Activated naive CD4-positive, alpha-beta T cell treated with anti-CD3 and anti-CD28 coated beads for 36 hours (primary cell): ENCODE measurements at regions of chr22 and their contacts with region 1.

Region 1: DNA sequence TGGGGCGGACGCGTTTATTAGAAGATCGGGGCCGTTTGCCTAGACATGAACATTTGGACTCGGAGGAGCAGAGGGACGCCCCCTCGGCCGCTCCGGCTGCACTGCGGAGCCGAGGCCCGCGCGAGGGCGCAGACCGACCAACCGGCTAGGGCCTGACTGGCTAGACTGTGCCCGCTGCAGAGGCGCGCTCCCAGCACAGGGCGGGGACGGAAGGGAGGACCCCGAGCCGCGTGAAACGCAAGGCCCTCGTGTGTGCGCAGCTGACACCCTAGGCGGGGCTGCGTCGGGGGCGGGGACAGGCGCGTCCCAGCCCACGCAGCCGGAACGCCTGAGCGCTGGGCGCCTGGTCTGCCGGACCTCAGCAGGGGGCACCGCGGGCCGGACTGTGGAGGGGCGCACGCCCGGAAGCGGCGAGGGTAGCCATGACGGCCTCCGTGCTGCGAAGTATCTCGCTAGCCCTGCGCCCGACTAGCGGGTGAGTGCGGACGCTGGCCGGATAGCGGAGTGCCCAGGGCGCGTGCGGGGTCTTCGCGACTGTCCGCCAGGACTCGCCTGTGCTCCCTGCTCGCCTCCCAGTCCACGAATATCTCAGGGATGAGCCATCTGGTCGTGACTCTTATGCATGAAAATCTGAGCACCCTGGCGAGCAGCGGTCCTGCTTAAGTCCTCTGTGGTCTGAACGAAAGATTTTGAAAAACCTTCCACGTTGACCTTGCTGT is at the start of gene MRPL40:
- DNase-seq: peak; percentile 92
- H3K4me3 Mint-ChIP-seq: peak within 1 kb of the TSS; percentile 73
- H3K27ac Mint-ChIP-seq: peak within 1 kb of the TSS; percentile 88
- H3K4me1 Mint-ChIP-seq: peaks cover 44% of the 10 kb centered on the region
- H3K27me3 Mint-ChIP-seq: no peaks in the 10 kb centered on the region
- total RNA-seq, gene MRPL40: 32.6 to 34.9 TPM

Region 2: DNA sequence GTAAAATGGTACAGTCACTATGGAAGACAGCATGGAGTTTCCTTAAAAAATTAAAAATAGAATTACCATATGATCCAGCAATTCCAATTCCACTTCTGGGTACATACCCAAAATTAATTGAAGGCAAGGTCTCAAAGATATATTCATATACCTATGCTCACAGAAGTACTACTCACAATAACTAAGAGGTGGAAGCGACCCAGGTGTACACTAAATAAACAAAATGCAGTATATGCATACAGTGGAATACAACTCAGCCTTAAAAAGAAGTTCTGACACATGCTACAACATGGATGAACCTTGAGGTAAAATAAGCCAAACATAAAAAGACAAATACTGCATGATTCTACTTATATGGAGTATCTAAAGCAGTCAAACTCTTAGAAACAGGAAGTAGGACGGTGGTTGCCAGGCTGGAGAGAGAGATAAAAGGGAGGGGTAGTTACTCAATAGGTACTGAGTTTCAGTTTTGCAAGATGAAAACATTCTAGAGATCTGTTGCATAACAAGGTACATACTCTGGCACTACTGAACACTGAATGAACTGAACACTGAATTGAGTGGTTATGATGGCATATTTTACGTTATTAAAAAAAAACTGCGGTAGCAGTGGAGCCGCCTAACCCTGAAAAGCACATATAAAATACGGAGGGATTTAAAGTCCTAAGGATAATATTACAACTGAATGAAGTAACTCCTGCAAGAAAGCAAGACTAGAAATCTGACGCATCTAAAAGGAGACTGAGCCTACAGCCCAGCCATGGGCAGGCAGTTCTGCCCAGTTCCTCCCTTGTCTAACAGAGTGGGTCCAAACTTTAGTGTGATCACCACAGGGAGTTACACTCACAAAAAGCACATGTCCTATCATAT is 322.9 kb before region 1 on chr22:
- CTCF ChIA-PET with region 1: no interaction called
- intact Hi-C with region 1: loop called (anchors 5 kb)
- DNase-seq: peak; percentile 78
- H3K4me3 Mint-ChIP-seq: peak overlapping the region; percentile 39
- H3K27ac Mint-ChIP-seq: peak overlapping the region; percentile 79
- H3K4me1 Mint-ChIP-seq: peaks cover 67% of the 10 kb centered on the region
- H3K27me3 Mint-ChIP-seq: no peaks in the 10 kb centered on the region

Region 3: GRCh38 chr22:19178656-19179496 is 253.4 kb before region 1 on chr22 and contains the start of gene SLC25A1:
- CTCF ChIA-PET with region 1: interaction called, 3 read pairs
- intact Hi-C with region 1: loop called (anchors 5 kb)
- DNase-seq: peak; percentile 85
- H3K4me3 Mint-ChIP-seq: peak within 1 kb of the TSS; percentile 75
- H3K27ac Mint-ChIP-seq: peak within 1 kb of the TSS; percentile 53
- H3K4me1 Mint-ChIP-seq: peaks cover 31% of the 10 kb centered on the region
- H3K27me3 Mint-ChIP-seq: no peaks in the 10 kb centered on the region
- total RNA-seq, gene SLC25A1: 54.0 to 58.4 TPM

Region 4: GRCh38 chr22:19291580-19292457 is 140.5 kb before region 1 on chr22 and contains the start of gene CLTCL1:
- CTCF ChIA-PET with region 1: no interaction called
- intact Hi-C with region 1: loop called (anchors 5 kb)
- DNase-seq: peak; percentile 69
- H3K4me3 Mint-ChIP-seq: peak within 1 kb of the TSS; percentile 87
- H3K27ac Mint-ChIP-seq: peak within 1 kb of the TSS; percentile 73
- H3K4me1 Mint-ChIP-seq: peaks cover 13% of the 10 kb centered on the region
- H3K27me3 Mint-ChIP-seq: peaks cover 15% of the 10 kb centered on the region
- total RNA-seq, gene CLTCL1: 0.57 to 1.0 TPM

Region 5: GRCh38 chr22:19447388-19448075 is 15.2 kb after region 1 on chr22 and contains the start of gene C22orf39:
- CTCF ChIA-PET with region 1: interaction called, 3 read pairs
- intact Hi-C with region 1: loop called (anchors 1 kb)
- DNase-seq: peak; percentile 93
- H3K4me3 Mint-ChIP-seq: peak within 1 kb of the TSS; percentile 86
- H3K27ac Mint-ChIP-seq: peak within 1 kb of the TSS; percentile 90
- H3K4me1 Mint-ChIP-seq: peaks cover 46% of the 10 kb centered on the region
- H3K27me3 Mint-ChIP-seq: no peaks in the 10 kb centered on the region
- total RNA-seq, gene C22orf39: 29.3 to 30.2 TPM